ENCODE measurements at regions of chr9 and their contacts with region 1.

Region 1: GRCh38 chr9:123081824-123082223 is 48.4 kb downstream of the GPR21 start:
- DNase-seq: no peak
- H3K4me3 Mint-ChIP-seq: no peak overlapping the region
- H3K27ac Mint-ChIP-seq: no peak overlapping the region
- H3K4me1 Mint-ChIP-seq: no peaks in the 10 kb centered on the region
- H3K27me3 Mint-ChIP-seq: no peaks in the 10 kb centered on the region

Region 2: GRCh38 chr9:122672481-122672880 is 409.3 kb before region 1 on chr9:
- intact Hi-C with region 1: no loop called
- DNase-seq: no peak
- H3K4me3 Mint-ChIP-seq: no peak overlapping the region
- H3K27ac Mint-ChIP-seq: no peak overlapping the region
- H3K4me1 Mint-ChIP-seq: peaks cover 2% of the 10 kb centered on the region
- H3K27me3 Mint-ChIP-seq: no peaks in the 10 kb centered on the region

Region 3: DNA sequence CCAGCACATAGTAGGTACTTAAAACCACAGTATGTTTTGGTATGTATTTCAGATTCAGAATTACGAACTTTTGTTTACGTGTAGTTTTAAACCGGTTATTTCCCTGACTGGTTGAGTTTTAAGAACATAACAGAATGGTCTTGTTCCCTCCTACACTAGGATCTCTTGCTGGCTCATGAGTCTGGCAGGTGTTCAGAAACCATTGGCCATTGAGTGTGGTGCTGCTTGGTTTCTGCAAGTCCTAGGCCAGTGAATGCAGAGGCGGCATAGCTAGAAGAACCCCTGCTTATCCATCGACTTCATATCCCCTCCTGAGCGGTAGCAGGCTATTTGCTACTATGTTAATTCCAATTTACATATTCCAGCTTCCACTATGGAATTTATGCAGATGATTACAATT is 17.2 kb after region 1 on chr9:
- intact Hi-C with region 1: no loop called
- DNase-seq: no peak
- H3K4me3 Mint-ChIP-seq: no peak overlapping the region
- H3K27ac Mint-ChIP-seq: no peak overlapping the region
- H3K4me1 Mint-ChIP-seq: no peaks in the 10 kb centered on the region
- H3K27me3 Mint-ChIP-seq: no peaks in the 10 kb centered on the region

Region 4: DNA sequence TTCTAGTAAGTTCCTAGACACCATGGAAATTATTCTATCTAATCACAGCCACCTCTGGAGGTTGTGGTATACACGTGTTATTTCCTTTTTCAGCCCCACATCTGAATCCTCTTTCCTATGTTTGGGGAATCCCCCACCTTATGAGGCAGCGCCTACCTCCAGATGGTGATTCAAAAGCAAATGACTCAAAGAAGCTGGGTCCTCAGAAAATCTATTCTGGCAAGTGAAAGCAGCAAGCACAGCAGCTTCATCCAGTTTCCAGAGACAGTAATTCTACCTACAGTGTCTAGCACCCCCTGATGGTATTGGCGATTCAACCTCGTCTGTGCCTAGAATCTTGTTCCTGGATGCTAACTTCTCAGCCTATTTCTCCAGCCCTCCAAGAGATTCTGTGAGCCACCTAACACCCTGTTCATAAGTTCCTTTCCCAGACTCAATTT is 143.6 kb after region 1 on chr9:
- intact Hi-C with region 1: loop called (anchors 5 kb)
- DNase-seq: peak; percentile 27
- H3K4me3 Mint-ChIP-seq: no peak overlapping the region
- H3K27ac Mint-ChIP-seq: peak overlapping the region; percentile 69
- H3K4me1 Mint-ChIP-seq: peaks cover 29% of the 10 kb centered on the region
- H3K27me3 Mint-ChIP-seq: no peaks in the 10 kb centered on the region

Region 5: GRCh38 chr9:123246534-123246933 is 164.7 kb after region 1 on chr9:
- intact Hi-C with region 1: no loop called
- DNase-seq: no peak
- H3K4me3 Mint-ChIP-seq: no peak overlapping the region
- H3K27ac Mint-ChIP-seq: no peak overlapping the region
- H3K4me1 Mint-ChIP-seq: peaks cover 10% of the 10 kb centered on the region
- H3K27me3 Mint-ChIP-seq: no peaks in the 10 kb centered on the region